PC-3 (cell line): ENCODE measurements at regions of chr20 and their contacts with region 1.

Region 1: GRCh38 chr20:63537525-63538203 is 488 bp upstream of the PTK6 start:
- DNase-seq: peak; percentile 98
- ATAC-seq: peak; percentile 85
- H3K4me3 ChIP-seq: peak overlapping the region; percentile 84
- H3K27ac ChIP-seq: peak overlapping the region; percentile 85
- H3K4me1 ChIP-seq: peaks cover 33% of the 10 kb centered on the region
- H3K27me3 ChIP-seq: no peaks in the 10 kb centered on the region
- CTCF ChIP-seq: peak; percentile 84

Region 2: GRCh38 chr20:63520504-63520933 is 17.1 kb before region 1 on chr20 and contains the start of gene PPDPF:
- CTCF ChIA-PET with region 1: interaction called, 4 read pairs
- POLR2A ChIA-PET with region 1: interaction called, 17 read pairs
- intact Hi-C with region 1: no loop called
- DNase-seq: peak; percentile 84
- ATAC-seq: peak; percentile 70
- H3K4me3 ChIP-seq: peak within 1 kb of the TSS; percentile 99
- H3K27ac ChIP-seq: peak within 1 kb of the TSS; percentile 75
- H3K4me1 ChIP-seq: peaks cover 13% of the 10 kb centered on the region
- H3K27me3 ChIP-seq: no peaks in the 10 kb centered on the region
- CTCF ChIP-seq: no peak
- total RNA-seq, gene PPDPF: 245 and 256 TPM in 2 replicates

Region 3: GRCh38 chr20:63627129-63627750 is 89.6 kb after region 1 on chr20:
- CTCF ChIA-PET with region 1: interaction called, 16 read pairs
- POLR2A ChIA-PET with region 1: interaction called, 5 read pairs
- intact Hi-C with region 1: loop called (anchors 5 kb)
- DNase-seq: peak; percentile 95
- ATAC-seq: peak; percentile 79
- H3K4me3 ChIP-seq: peak overlapping the region; percentile 93
- H3K27ac ChIP-seq: peak overlapping the region; percentile 58
- H3K4me1 ChIP-seq: peaks cover 14% of the 10 kb centered on the region
- H3K27me3 ChIP-seq: no peaks in the 10 kb centered on the region
- CTCF ChIP-seq: no peak

Region 4: DNA sequence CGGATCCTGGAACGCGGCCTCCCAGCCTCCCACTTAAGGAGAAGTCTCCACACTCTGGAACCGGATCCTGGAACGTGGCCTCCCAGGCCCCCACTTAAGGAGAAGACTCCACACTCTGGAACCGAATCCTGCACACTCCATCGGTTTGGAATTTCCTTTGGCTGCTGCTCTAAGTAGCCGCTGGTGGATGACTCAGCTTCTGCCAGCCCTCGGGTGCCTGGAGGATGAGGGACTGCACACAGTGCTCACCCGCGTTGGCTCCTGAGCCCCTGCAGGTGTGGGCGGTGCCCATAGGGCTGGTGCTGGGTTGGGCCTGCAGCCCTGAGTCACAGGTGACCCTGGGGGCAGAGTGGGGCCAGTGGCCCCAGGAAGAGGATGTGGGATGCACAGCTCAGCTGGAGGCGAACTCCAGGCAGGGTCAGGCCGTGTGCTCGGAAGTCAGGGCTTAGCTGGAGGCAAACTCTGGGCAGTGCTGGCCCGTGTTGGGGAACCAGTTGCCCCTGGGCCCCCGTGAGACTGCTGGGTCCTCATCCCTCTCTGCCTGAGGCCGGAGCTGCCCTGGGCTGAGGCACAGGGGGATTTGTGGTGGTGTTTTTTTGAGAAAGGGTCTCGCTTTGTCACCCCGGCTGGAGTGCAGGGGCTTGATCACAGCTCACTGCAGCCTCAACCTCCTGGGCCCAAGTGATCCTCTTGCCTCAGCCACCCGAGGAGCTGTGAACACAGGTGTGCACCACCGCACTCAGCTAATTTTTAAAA is 144.9 kb after region 1 on chr20:
- CTCF ChIA-PET with region 1: no interaction called
- POLR2A ChIA-PET with region 1: no interaction called
- intact Hi-C with region 1: loop called (anchors 2 kb)
- DNase-seq: peak; percentile 100
- ATAC-seq: peak; percentile 93
- H3K4me3 ChIP-seq: no peak overlapping the region
- H3K27ac ChIP-seq: peak overlapping the region; percentile 84
- H3K4me1 ChIP-seq: peaks cover 34% of the 10 kb centered on the region
- H3K27me3 ChIP-seq: no peaks in the 10 kb centered on the region
- CTCF ChIP-seq: no peak

Region 5: DNA sequence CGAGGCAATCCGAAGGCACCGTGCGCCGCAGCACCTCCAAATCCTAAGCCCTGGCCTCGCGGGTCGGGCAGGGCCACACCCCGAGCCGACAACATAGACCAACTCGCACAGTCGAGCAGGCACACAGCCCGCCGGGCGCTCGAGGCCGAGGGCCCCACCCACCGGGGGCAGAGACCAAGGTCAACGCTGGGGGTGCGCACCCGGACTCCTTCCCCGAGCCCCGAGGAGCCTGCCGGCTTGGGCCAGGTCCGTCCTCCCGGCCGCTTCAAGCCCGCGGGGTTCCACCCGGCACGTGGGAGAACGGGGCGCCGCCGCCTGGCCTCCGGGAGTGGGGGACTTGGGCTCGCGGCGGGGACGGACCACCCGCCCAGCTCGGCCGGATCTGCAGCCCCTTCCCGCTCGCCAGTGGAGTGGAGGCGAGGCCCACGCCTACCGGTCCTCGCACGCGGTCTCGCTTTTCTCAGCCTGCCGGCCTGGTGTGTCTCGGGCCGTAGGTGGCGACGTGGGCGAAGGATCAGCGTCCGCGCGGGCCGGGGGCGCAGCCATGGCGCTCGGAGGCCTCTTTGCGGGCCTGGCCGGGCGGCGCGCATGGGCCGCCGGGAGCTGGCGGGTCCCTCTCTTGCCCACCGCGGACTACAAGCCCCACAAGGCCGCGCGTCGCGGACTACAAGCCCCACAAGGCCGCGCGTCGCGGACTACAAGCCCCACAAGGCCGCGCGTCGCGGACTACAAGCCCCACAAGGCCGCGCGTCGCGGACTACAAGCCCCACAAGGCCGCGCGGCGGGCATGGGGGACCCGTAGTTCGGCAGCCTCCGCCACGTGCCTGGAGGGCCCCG is 418.4 kb after region 1 on chr20 and contains the start of gene UCKL1:
- CTCF ChIA-PET with region 1: no interaction called
- POLR2A ChIA-PET with region 1: no interaction called
- intact Hi-C with region 1: loop called (anchors 5 kb)
- DNase-seq: peak; percentile 83
- ATAC-seq: peak; percentile 72
- H3K4me3 ChIP-seq: peak within 1 kb of the TSS; percentile 95
- H3K27ac ChIP-seq: peak within 1 kb of the TSS; percentile 91
- H3K4me1 ChIP-seq: peaks cover 33% of the 10 kb centered on the region
- H3K27me3 ChIP-seq: no peaks in the 10 kb centered on the region
- CTCF ChIP-seq: no peak
- total RNA-seq, gene UCKL1: 37.2 and 47.4 TPM in 2 replicates